ENCODE measurements at regions of chr10 and their contacts with region 1.

Region 1: GRCh38 chr10:70221030-70221429 is 12.2 kb downstream of the PPA1 start:
- DNase-seq: no peak
- ATAC-seq: no peak
- H3K4me3 ChIP-seq: no peak overlapping the region
- H3K27ac ChIP-seq: no peak overlapping the region
- H3K4me1 ChIP-seq: peaks cover 11% of the 10 kb centered on the region; the same call in 2 of the 3 replicates
- CTCF ChIP-seq: no peak
- EP300 ChIP-seq: no peak
- POLR2A ChIP-seq: no peak
- RAD21 ChIP-seq: no peak

Region 2: DNA sequence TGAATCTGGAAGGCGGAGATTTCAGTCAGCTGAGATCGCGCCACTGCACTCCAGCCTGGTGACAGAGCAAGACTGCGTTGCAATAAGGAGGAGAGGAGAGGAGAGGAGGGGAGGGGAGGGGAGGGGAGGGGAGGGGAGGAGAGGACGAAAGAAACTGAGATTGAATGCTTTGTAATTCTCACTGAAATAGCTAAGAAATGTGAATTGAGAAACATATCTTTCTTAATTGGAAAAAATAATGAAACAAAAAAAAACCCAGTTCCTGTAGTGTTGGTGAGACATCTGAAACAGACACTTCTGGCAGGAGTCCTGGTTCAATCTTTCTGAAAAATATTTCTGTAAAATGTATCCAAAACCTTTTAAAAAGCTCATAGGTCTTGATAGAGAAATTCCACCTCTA is 14.3 kb before region 1 on chr10:
- CTCF ChIA-PET with region 1: interaction called, 19 read pairs
- POLR2A ChIA-PET with region 1: no interaction called
- DNase-seq: no peak
- ATAC-seq: no peak
- H3K4me3 ChIP-seq: no peak overlapping the region
- H3K27ac ChIP-seq: no peak overlapping the region
- H3K4me1 ChIP-seq: no peaks in the 10 kb centered on the region
- CTCF ChIP-seq: no peak
- EP300 ChIP-seq: no peak
- POLR2A ChIP-seq: no peak
- RAD21 ChIP-seq: no peak

Region 3: GRCh38 chr10:70250961-70251680 is 30.1 kb after region 1 on chr10:
- CTCF ChIA-PET with region 1: interaction called, 14 read pairs
- POLR2A ChIA-PET with region 1: no interaction called
- DNase-seq: no peak
- ATAC-seq: no peak
- H3K4me3 ChIP-seq: no peak overlapping the region
- H3K27ac ChIP-seq: no peak overlapping the region
- H3K4me1 ChIP-seq: no peaks in the 10 kb centered on the region
- CTCF ChIP-seq: no peak
- EP300 ChIP-seq: no peak
- POLR2A ChIP-seq: no peak
- RAD21 ChIP-seq: no peak

Region 4: GRCh38 chr10:70348228-70348850 is 127.3 kb after region 1 on chr10:
- CTCF ChIA-PET with region 1: interaction called, 30 read pairs
- POLR2A ChIA-PET with region 1: interaction called, 3 read pairs
- DNase-seq: peak; percentile 17 to 25
- ATAC-seq: peak; percentile 34 to 80; a peak in 4 of 6 replicates
- H3K4me3 ChIP-seq: no peak overlapping the region
- H3K27ac ChIP-seq: no peak overlapping the region
- H3K4me1 ChIP-seq: peaks cover 25% of the 10 kb centered on the region
- CTCF ChIP-seq: peak; percentile 37; the same call in 2 of the 3 replicates
- EP300 ChIP-seq: no peak
- POLR2A ChIP-seq: no peak
- RAD21 ChIP-seq: peak; percentile 25 to 55; a peak in 2 of 5 replicates

Region 5: GRCh38 chr10:70381471-70382421 is 160.7 kb after region 1 on chr10:
- CTCF ChIA-PET with region 1: interaction called, 554 read pairs
- POLR2A ChIA-PET with region 1: interaction called, 8 read pairs
- DNase-seq: peak; percentile 25 to 59
- ATAC-seq: peak; percentile 44 to 56
- H3K4me3 ChIP-seq: peak overlapping the region; percentile 72
- H3K27ac ChIP-seq: peak overlapping the region; percentile 80 to 91
- H3K4me1 ChIP-seq: peaks cover 29% of the 10 kb centered on the region
- CTCF ChIP-seq: no peak
- EP300 ChIP-seq: no peak
- POLR2A ChIP-seq: no peak
- RAD21 ChIP-seq: no peak

Measured in A549 (cell line).